PC-9 (cell line): ENCODE measurements at regions of chr7 and their contacts with region 1.

Region 1: GRCh38 chr7:100435401-100436304 is 644 bp downstream of the PPP1R35 start:
- DNase-seq: peak; percentile 44 to 51
- H3K4me3 ChIP-seq: peak overlapping the region; percentile 87
- H3K27ac ChIP-seq: peak overlapping the region; percentile 77
- H3K4me1 ChIP-seq: peaks cover 39% of the 10 kb centered on the region
- H3K27me3 ChIP-seq: no peaks in the 10 kb centered on the region
- CTCF ChIP-seq: no peak

Region 2: DNA sequence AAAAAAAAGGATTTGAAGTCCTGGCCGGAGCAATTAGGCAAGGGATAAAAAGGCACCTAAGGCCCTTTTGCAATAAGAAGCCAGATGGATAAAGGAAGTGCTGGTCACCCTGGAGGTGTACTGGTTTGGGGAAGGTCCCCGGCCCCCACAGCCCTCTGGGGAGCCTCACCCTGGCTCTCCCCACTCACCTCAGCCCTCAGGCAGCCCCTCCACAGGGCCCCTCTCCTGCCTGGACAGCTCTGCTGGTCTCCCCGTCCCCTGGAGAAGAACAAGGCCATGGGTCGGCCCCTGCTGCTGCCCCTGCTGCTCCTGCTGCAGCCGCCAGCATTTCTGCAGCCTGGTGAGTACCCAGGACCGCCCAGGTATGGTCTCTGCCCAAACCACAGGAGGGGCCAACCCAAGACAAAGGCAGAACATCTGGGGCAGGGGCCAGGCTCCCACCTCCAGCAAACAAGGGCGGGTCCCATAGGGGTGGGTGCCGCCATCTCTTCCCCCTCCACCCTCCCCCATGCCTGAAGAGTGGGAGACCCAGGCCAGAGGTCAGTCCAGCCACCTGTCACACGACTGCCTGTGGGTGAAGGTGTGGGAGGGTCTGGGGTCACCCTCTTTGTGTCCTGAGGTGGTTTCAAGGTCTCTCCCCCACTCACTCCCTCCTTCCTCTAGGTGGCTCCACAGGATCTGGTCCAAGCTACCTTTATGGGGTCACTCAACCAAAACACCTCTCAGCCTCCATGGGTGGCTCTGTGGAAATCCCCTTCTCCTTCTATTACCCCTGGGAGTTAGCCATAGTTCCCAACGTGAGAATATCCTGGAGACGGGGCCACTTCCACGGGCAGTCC is 77.4 kb before region 1 on chr7 and contains the start of gene PILRB:
- CTCF ChIA-PET with region 1: no interaction called
- POLR2A ChIA-PET with region 1: no interaction called
- intact Hi-C with region 1: no loop called
- DNase-seq: no peak
- H3K4me3 ChIP-seq: no peak within 1 kb of the TSS
- H3K27ac ChIP-seq: no peak within 1 kb of the TSS
- H3K4me1 ChIP-seq: no peaks in the 10 kb centered on the region
- H3K27me3 ChIP-seq: no peaks in the 10 kb centered on the region
- CTCF ChIP-seq: no peak
- total RNA-seq, gene PILRB: 119 and 121 TPM in 2 replicates

Region 3: GRCh38 chr7:100380196-100380595 is 55.5 kb before region 1 on chr7:
- CTCF ChIA-PET with region 1: no interaction called
- POLR2A ChIA-PET with region 1: interaction called, 14 read pairs
- intact Hi-C with region 1: no loop called
- DNase-seq: no peak
- H3K4me3 ChIP-seq: no peak overlapping the region
- H3K27ac ChIP-seq: no peak overlapping the region
- H3K4me1 ChIP-seq: no peaks in the 10 kb centered on the region
- H3K27me3 ChIP-seq: no peaks in the 10 kb centered on the region
- CTCF ChIP-seq: no peak

Region 4: GRCh38 chr7:100394077-100394476 is 41.6 kb before region 1 on chr7:
- CTCF ChIA-PET with region 1: interaction called, 10 read pairs
- POLR2A ChIA-PET with region 1: no interaction called
- intact Hi-C with region 1: no loop called
- DNase-seq: no peak
- H3K4me3 ChIP-seq: no peak overlapping the region
- H3K27ac ChIP-seq: no peak overlapping the region
- H3K4me1 ChIP-seq: no peaks in the 10 kb centered on the region
- H3K27me3 ChIP-seq: peaks cover 3% of the 10 kb centered on the region; the same call in 1 of the 2 replicates
- CTCF ChIP-seq: no peak